Psoas muscle (tissue), 8 donors: ENCODE measurements at regions of chr1 and their contacts with region 1.

Region 1: DNA sequence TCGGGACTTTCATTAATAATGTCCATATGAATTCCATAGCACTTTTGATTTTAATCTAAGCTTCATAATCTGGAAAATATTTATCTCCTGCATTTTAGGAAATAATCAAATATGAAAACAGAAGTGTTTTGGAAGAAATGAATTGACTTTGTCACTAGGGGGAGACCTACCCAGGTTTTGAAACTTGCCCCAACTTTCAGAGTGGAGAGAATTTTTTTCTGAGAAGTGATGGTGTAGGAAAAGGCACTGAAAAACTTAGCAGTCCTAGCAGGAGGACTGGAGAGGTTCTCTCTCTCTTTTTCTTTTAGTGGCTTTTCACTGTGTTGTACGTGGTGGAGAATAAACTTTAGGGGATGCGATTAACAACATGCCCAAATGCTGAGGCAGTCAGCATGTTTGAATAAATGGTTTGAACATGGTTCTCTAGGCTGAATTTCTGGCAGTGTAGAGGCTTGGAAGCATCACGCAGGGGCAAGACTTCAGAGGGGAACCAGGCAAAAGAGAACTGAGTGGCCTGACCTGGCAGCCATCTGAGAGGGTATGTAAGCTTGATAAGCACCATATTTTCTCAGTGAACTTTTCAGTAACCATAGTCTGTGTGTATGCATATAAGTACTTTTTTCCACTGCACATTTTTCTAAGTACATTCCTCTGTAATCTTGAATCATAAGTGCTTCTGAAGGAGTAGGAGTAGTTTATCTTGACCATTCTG is 68.3 kb upstream of the NEK7 start:
- DNase-seq: no peak
- ATAC-seq: peak in 1 of 4 donors; percentile 65
- H3K4me3 ChIP-seq: no peak overlapping the region
- H3K27ac ChIP-seq: no peak overlapping the region
- H3K4me1 ChIP-seq: no peaks in the 10 kb centered on the region
- H3K27me3 ChIP-seq: peaks cover 0 to 2% (median 0%) of the 10 kb centered on the region in 3 donors
- CTCF ChIP-seq: peak; percentile 61

Region 2: GRCh38 chr1:197814306-197814705 is 274.2 kb before region 1 on chr1:
- intact Hi-C with region 1: no loop called
- DNase-seq: no peak
- ATAC-seq: no peak
- H3K4me3 ChIP-seq: no peak overlapping the region
- H3K27ac ChIP-seq: no peak overlapping the region
- H3K4me1 ChIP-seq: no peaks in the 10 kb centered on the region
- H3K27me3 ChIP-seq: peaks cover 0 to under 1% (median 0%) of the 10 kb centered on the region in 3 donors
- CTCF ChIP-seq: no peak

Region 3: DNA sequence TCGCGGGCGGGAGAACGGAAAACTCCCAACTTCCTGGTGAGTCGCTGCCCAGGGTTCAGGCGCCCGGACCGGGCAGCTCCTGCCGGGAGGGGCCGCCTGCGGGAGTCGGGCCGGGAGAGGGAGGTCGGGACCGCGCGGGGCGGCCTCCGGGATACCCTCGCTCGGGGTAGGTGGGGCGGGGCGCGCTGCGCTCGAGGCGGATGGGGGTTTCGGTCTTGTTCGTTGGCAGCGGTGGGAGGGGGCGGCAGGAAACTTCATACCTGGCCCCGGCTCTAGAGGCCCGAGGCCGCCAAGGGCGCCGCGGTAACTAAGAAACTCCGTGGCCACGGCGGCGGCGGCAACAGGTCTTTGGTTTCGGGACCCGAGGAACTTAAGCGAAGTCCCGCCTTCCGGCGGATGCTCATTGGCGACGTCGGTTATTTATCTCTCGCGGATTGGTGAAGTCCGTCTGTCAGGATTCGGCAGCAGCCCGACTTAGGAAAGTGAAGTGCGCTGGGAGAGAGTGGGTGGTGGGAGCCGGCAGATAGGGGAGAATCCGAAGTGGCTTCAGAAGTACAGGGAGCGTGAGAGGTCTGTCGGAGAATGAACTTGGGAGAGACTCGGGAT is 68.8 kb after region 1 on chr1:
- intact Hi-C with region 1: loop called in 1 of 2 experiments (anchors 10 kb)
- DNase-seq: peak; percentile 84 to 91
- ATAC-seq: peak; percentile 65 to 75 (median 67)
- H3K4me3 ChIP-seq: peak overlapping the region; percentile 83
- H3K27ac ChIP-seq: peak overlapping the region; percentile 94
- H3K4me1 ChIP-seq: peaks cover 55% of the 10 kb centered on the region
- H3K27me3 ChIP-seq: no peaks in the 10 kb centered on the region
- CTCF ChIP-seq: no peak

Region 4: GRCh38 chr1:198199105-198199504 is 110.6 kb after region 1 on chr1:
- intact Hi-C with region 1: no loop called
- DNase-seq: no peak
- ATAC-seq: no peak
- H3K4me3 ChIP-seq: no peak overlapping the region
- H3K27ac ChIP-seq: no peak overlapping the region
- H3K4me1 ChIP-seq: peaks cover 30% of the 10 kb centered on the region
- H3K27me3 ChIP-seq: no peaks in the 10 kb centered on the region
- CTCF ChIP-seq: no peak

Region 5: GRCh38 chr1:198359024-198359653 is 270.6 kb after region 1 on chr1:
- intact Hi-C with region 1: loop called (anchors 2 to 10 kb)
- DNase-seq: no peak
- ATAC-seq: no peak
- H3K4me3 ChIP-seq: no peak overlapping the region
- H3K27ac ChIP-seq: no peak overlapping the region
- H3K4me1 ChIP-seq: no peaks in the 10 kb centered on the region
- H3K27me3 ChIP-seq: no peaks in the 10 kb centered on the region
- CTCF ChIP-seq: peak; percentile 50

Region 6: GRCh38 chr1:198465201-198466144 is 377.0 kb after region 1 on chr1:
- intact Hi-C with region 1: loop called in 1 of 2 experiments (anchors 5 kb)
- DNase-seq: no peak
- ATAC-seq: peak in 1 of 4 donors; percentile 69
- H3K4me3 ChIP-seq: no peak overlapping the region
- H3K27ac ChIP-seq: no peak overlapping the region
- H3K4me1 ChIP-seq: no peaks in the 10 kb centered on the region
- H3K27me3 ChIP-seq: no peaks in the 10 kb centered on the region
- CTCF ChIP-seq: peak; percentile 59